SK-N-SH (cell line): ENCODE measurements at regions of chr3 and their contacts with region 1.

Region 1: DNA sequence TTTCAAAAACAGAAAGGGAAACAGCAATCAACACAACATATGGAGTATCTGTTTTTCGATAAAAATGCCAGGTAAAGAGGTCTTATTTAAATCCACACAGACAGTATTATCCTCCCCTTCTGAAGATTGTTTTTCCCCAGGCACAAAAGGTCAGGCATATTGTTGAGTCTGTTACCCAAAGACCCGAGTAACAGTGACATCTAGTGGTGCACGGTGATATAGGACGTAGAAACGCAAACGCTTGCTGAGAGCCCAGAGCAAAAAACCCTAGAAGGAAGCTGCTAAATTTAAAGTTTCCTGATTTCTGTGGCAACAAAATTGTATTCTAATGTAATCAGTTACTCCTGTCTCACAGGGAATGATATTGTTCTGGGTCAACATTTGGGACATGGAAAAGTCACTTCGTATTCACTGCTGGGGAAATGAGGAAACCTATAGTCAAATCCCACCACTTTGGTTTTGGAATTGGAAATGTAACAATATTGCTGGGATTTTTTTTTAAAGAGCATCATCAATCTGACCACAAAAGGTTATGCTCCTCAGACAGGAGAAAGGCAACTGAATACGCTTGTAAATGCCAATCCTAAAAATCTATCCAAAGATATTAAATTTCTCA is 312.7 kb upstream of the CCDC54 start:
- DNase-seq: peak; percentile 50
- H3K4me3 ChIP-seq: no peak overlapping the region; a peak in 1 of 4 replicates
- H3K27ac ChIP-seq: peak overlapping the region; percentile 39 to 64; a peak in 3 of 4 replicates
- H3K4me1 ChIP-seq: peaks cover 9 to 58% of the 10 kb centered on the region in 2 experiments; a peak in 3 of 4 replicates
- H3K27me3 ChIP-seq: no peaks in the 10 kb centered on the region
- CTCF ChIP-seq: peak; percentile 92
- EP300 ChIP-seq: no peak
- RAD21 ChIP-seq: peak; percentile 97

Region 2: DNA sequence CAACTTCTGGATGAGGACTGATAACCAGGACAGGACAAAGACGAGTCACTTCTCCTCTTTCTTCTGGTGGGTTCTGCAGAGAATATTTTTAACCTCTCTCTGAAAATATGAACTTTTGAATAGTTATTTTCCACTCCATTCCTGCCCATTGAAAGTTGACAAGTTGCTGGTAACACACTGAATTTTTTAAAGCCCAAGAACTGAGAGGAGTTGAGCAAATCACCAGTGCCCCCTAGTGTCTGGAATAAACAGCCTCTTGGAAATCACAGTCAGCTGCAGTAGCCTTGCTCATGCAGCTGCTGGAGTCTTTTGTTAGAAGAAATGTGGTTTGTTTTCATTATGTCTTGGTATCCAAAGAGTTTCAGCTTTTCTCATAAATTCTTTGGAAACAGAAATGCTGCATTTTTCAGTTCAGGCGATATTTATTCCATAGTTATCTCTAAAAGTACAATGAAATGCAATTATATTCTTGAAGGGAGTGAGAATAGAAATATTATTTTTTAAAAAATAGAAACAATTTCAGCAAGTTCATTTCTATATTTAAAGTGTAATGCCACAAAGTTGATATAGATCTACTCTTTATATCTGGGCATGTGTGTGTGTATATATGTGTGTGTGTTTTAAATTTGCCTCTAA is 454.8 kb before region 1 on chr3:
- CTCF ChIA-PET with region 1: interaction called, 15 read pairs
- POLR2A ChIA-PET with region 1: no interaction called
- DNase-seq: peak; percentile 33
- H3K4me3 ChIP-seq: peak overlapping the region in 1 of 2 experiments; percentile 8; a peak in 1 of 4 replicates
- H3K27ac ChIP-seq: peak overlapping the region in 1 of 2 experiments; percentile 69; a peak in 2 of 4 replicates
- H3K4me1 ChIP-seq: peaks cover 4 to 26% of the 10 kb centered on the region in 2 experiments
- H3K27me3 ChIP-seq: no peaks in the 10 kb centered on the region
- CTCF ChIP-seq: peak; percentile 95
- EP300 ChIP-seq: no peak
- RAD21 ChIP-seq: peak; percentile 99

Region 3: GRCh38 chr3:107024551-107025026 is 40.0 kb before region 1 on chr3:
- CTCF ChIA-PET with region 1: interaction called, 10 read pairs
- POLR2A ChIA-PET with region 1: no interaction called
- DNase-seq: peak; percentile 41
- H3K4me3 ChIP-seq: 0 out of 4 replicates have a peak overlapping the region, but pooled peaks of 1 of the 2 experiments have one; percentile 6
- H3K27ac ChIP-seq: peak overlapping the region; percentile 46 to 71
- H3K4me1 ChIP-seq: peaks cover 7 to 16% of the 10 kb centered on the region in 2 experiments
- H3K27me3 ChIP-seq: no peaks in the 10 kb centered on the region
- CTCF ChIP-seq: no peak
- EP300 ChIP-seq: no peak; a peak in 1 of 4 replicates
- RAD21 ChIP-seq: no peak

Region 4: DNA sequence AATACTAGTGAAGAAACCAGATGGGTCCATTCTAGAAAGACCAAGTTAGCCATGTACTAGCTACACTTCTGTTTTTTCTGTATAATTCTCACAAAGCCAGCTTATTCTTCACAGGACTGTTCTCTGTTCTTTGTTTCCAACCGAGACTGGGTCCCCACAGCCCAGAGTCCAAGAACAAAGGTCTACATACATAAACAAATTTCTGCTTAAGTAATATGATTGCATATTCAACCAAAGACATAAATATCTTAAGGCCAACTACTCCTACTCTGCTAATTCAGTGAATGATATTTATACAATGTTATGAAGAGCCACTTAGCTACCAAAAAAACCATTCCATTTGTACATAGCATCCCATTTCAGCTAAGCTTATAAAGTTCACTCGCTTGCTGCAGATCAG is 12.8 kb after region 1 on chr3:
- CTCF ChIA-PET with region 1: interaction called, 27 read pairs
- POLR2A ChIA-PET with region 1: no interaction called
- DNase-seq: no peak
- H3K4me3 ChIP-seq: no peak overlapping the region
- H3K27ac ChIP-seq: no peak overlapping the region
- H3K4me1 ChIP-seq: peaks cover 0 to 4% of the 10 kb centered on the region in 2 experiments; a peak in 1 of 4 replicates
- H3K27me3 ChIP-seq: no peaks in the 10 kb centered on the region
- CTCF ChIP-seq: no peak
- EP300 ChIP-seq: no peak
- RAD21 ChIP-seq: no peak